ENCODE measurements at regions of chr1 and their contacts with region 1.

Region 1: DNA sequence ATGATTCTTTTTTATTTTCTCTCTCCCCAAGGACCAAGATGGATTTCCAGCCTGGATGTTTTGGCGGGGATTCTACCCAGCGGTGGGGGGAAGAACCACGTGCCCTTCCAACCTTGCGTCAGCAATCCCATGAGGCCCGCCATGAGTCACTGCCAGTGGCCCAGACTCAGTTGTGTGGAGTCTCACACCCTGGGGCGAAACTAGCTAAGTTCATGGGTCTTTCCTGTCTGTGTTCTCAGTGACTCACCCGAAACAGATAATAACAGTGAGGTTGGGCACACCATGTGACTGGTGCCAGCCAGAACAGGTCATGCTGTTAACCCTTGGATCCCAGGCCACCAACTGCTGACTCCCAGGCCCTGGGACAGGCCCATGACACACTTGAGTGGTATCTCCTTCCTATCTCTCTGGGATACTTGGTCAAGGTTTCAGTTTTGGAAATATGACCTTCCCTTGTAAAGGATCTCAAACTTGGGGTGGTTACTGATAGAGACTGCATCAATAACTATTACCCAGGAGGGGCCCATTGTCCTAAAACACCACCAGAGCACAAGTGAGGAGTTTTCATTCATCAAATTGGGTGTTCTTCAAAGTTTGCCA is 98.0 kb upstream of the DUSP10 start:
- DNase-seq: peak; percentile 79
- H3K4me3 Mint-ChIP-seq: no peak overlapping the region
- H3K27ac Mint-ChIP-seq: peak overlapping the region; percentile 80
- H3K4me1 Mint-ChIP-seq: peaks cover 49% of the 10 kb centered on the region
- H3K27me3 Mint-ChIP-seq: no peaks in the 10 kb centered on the region

Region 2: DNA sequence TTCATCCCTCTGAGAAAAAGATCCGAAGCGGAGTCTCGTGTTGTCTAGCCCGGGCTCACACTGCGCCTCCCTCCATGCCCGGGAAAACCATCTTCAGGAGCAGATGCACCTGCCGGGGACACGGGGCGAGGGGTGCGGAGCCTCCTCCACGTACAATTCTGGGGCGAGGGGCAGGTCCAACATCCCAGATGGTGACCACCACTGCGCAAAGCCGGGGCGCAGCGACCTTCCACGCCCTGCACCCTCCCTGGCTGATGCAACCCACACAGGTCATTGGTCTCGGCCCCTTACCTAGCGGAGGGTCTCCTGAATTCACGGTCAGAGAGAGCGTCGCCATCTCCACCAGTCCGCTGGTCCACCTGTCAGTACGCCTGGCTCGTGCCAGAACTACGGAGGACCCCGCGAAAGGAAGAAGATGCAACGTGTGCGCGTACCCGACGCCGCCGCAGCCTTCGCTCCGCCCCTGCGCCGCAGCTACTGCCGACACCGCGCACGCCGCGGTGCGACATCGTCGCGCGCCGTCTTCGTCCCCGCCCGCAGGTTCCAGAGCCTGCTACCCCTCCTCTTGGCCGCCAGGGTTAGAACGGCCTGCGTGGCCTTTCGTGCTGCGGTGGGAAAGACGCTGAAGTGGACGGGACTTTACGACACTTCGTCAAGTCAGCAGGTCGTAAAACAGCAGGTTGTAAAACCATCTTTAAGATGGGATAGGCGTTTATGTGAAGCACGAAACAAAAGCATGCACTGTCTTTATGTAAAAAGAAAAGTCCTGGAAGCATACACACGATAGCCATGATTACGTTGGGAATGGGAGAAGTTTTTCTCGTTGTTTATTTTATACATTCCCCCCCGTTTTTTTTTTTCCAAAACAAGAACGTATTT is 1793.6 kb before region 1 on chr1 and contains the start of gene EPRS1:
- intact Hi-C with region 1: loop called (anchors 10 kb)
- DNase-seq: peak; percentile 98
- H3K4me3 Mint-ChIP-seq: peak within 1 kb of the TSS; percentile 91
- H3K27ac Mint-ChIP-seq: peak within 1 kb of the TSS; percentile 92
- H3K4me1 Mint-ChIP-seq: peaks cover 37% of the 10 kb centered on the region
- H3K27me3 Mint-ChIP-seq: no peaks in the 10 kb centered on the region
- total RNA-seq, gene EPRS1: 182 and 200 TPM in 2 replicates

Region 3: DNA sequence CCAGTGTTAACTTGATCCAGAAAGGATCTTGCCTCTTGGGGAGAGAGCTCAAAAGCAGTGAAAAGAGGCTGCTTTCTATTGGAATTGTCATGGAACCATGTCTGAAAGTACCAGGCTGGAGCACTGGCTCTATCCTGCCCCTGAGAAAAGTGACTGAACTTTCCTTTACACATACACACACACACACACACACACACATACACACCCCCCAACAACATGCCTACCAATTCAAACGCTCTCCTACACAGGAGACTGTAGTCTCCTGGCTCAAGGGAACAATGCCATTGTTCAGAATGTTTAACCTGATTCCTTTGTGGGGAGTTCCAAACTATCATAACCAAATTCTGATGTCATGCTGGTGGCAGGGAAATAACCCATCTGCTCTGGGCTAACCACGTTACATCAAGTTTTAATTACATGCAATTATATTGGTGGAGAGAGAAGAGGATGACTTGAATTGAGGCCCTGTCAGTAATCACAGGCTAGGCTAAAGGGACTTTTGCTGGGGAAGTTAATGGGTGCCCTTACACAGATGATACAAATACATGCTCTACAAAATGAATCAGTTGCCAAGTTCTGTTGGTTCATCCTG is 45.7 kb before region 1 on chr1:
- intact Hi-C with region 1: loop called (anchors 2 kb)
- DNase-seq: peak; percentile 77
- H3K4me3 Mint-ChIP-seq: peak overlapping the region; percentile 45
- H3K27ac Mint-ChIP-seq: peak overlapping the region; percentile 90
- H3K4me1 Mint-ChIP-seq: peaks cover 36% of the 10 kb centered on the region
- H3K27me3 Mint-ChIP-seq: no peaks in the 10 kb centered on the region

Region 4: GRCh38 chr1:221824025-221824424 is 15.9 kb before region 1 on chr1:
- intact Hi-C with region 1: loop called (anchors 1 kb)
- DNase-seq: peak; percentile 57
- H3K4me3 Mint-ChIP-seq: no peak overlapping the region
- H3K27ac Mint-ChIP-seq: peak overlapping the region; percentile 40
- H3K4me1 Mint-ChIP-seq: peaks cover 52% of the 10 kb centered on the region
- H3K27me3 Mint-ChIP-seq: no peaks in the 10 kb centered on the region

Region 5: GRCh38 chr1:221829327-221830015 is 10.4 kb before region 1 on chr1:
- intact Hi-C with region 1: loop called (anchors 1 kb)
- DNase-seq: peak; percentile 84
- H3K4me3 Mint-ChIP-seq: peak overlapping the region; percentile 73
- H3K27ac Mint-ChIP-seq: peak overlapping the region; percentile 90
- H3K4me1 Mint-ChIP-seq: peaks cover 67% of the 10 kb centered on the region
- H3K27me3 Mint-ChIP-seq: no peaks in the 10 kb centered on the region

Region 6: DNA sequence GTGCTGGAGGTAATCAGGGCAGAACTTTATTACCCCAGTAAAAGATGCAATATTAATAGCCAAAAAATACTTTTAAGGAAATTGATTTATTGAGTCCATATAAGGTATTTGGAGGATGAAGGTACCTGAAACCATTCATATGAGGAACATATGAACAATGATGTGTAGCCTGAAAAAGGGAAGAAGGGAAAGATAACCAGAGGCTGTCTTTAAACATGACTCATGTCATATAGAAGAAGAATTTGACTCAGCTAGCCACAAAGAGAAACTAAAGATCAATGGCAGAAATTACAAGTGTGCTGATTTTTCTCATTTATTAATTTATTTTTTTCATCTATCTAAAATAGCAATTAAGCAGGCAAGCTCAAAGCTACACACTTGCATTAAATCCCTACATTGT is 38.2 kb after region 1 on chr1:
- intact Hi-C with region 1: loop called (anchors 2 kb)
- DNase-seq: no peak
- H3K4me3 Mint-ChIP-seq: no peak overlapping the region
- H3K27ac Mint-ChIP-seq: no peak overlapping the region
- H3K4me1 Mint-ChIP-seq: peaks cover 10% of the 10 kb centered on the region
- H3K27me3 Mint-ChIP-seq: peaks cover 2% of the 10 kb centered on the region

Region 7: DNA sequence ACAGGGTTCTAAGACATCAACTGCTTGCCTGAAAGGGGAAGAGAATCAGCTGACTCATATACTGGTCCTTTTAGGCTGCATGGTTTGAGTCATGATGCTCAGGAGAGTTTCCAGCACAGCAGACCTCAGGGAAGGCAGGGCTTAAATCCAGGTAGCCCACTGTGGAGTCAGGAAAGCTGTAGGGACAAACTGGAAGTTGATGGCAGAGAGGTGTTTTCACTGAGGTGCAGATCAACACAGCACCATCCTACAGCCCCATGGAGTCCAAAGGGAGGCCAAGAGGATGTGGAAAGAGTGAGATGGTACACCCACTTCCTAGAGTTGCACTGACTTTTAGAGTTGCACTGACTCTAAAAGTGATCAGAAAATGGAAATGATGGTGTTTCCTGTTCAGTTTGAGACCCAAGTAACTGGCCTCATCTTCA is 154.4 kb after region 1 on chr1:
- intact Hi-C with region 1: loop called (anchors 5 kb)
- DNase-seq: peak; percentile 65
- H3K4me3 Mint-ChIP-seq: peak overlapping the region; percentile 23
- H3K27ac Mint-ChIP-seq: peak overlapping the region; percentile 92
- H3K4me1 Mint-ChIP-seq: peaks cover 26% of the 10 kb centered on the region
- H3K27me3 Mint-ChIP-seq: no peaks in the 10 kb centered on the region

Region 8: GRCh38 chr1:222233444-222234158 is 393.7 kb after region 1 on chr1:
- intact Hi-C with region 1: no loop called
- DNase-seq: no peak
- H3K4me3 Mint-ChIP-seq: no peak overlapping the region
- H3K27ac Mint-ChIP-seq: no peak overlapping the region
- H3K4me1 Mint-ChIP-seq: no peaks in the 10 kb centered on the region
- H3K27me3 Mint-ChIP-seq: no peaks in the 10 kb centered on the region

Measured in activated CD4-positive, alpha-beta T cell treated with anti-CD3 and anti-CD28 coated beads, Interleukin-2, amount 10 ng/mL, durations not matched to agents 24 days and 14 days (primary cell).